Activated CD4-positive, alpha-beta memory T cell treated with anti-CD3 and anti-CD28 coated beads, Interleukin-2, amount 10 ng/mL, durations not matched to agents 7 days and 5 days (primary cell): ENCODE measurements at regions of chr3 and their contacts with region 1.

Region 1: DNA sequence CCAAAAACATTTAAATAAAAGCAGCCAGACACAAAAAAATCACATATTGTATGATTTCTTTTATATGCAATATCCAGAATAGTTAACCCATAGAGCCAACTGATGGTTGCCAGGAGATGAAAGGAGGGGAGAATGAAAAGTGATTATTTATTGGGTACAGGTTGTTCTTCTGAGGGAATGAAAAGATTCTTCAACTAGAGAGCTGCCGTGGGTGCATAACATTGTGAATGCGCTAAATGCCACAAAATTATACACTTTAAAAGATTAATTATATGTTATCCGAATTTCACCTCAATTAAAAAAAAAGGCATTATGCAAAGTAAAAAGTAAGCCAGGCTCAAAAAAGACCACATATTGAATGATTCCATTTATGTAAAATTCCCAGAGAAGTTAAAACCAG is 36.1 kb downstream of the PRKAR2A start:
- DNase-seq: no peak
- H3K4me3 Mint-ChIP-seq: no peak overlapping the region
- H3K27ac Mint-ChIP-seq: peak overlapping the region; percentile 88
- H3K4me1 Mint-ChIP-seq: peaks cover 31% of the 10 kb centered on the region
- H3K27me3 Mint-ChIP-seq: no peaks in the 10 kb centered on the region

Region 2: GRCh38 chr3:48708481-48708889 is 103.0 kb before region 1 on chr3:
- CTCF ChIA-PET with region 1: no interaction called
- POLR2A ChIA-PET with region 1: no interaction called
- DNase-seq: no peak
- H3K4me3 Mint-ChIP-seq: no peak overlapping the region
- H3K27ac Mint-ChIP-seq: no peak overlapping the region
- H3K4me1 Mint-ChIP-seq: peaks cover 24% of the 10 kb centered on the region
- H3K27me3 Mint-ChIP-seq: no peaks in the 10 kb centered on the region

Region 3: GRCh38 chr3:48776854-48777253 is 34.7 kb before region 1 on chr3:
- CTCF ChIA-PET with region 1: no interaction called
- POLR2A ChIA-PET with region 1: no interaction called
- DNase-seq: no peak
- H3K4me3 Mint-ChIP-seq: no peak overlapping the region
- H3K27ac Mint-ChIP-seq: no peak overlapping the region
- H3K4me1 Mint-ChIP-seq: no peaks in the 10 kb centered on the region
- H3K27me3 Mint-ChIP-seq: no peaks in the 10 kb centered on the region

Region 4: GRCh38 chr3:48798998-48799397 is 12.5 kb before region 1 on chr3:
- CTCF ChIA-PET with region 1: no interaction called
- POLR2A ChIA-PET with region 1: no interaction called
- DNase-seq: no peak
- H3K4me3 Mint-ChIP-seq: no peak overlapping the region
- H3K27ac Mint-ChIP-seq: no peak overlapping the region
- H3K4me1 Mint-ChIP-seq: no peaks in the 10 kb centered on the region
- H3K27me3 Mint-ChIP-seq: no peaks in the 10 kb centered on the region

Region 5: GRCh38 chr3:48847504-48848423 is 36.2 kb after region 1 on chr3 and contains the start of gene PRKAR2A:
- CTCF ChIA-PET with region 1: no interaction called
- POLR2A ChIA-PET with region 1: interaction called, 13 read pairs
- DNase-seq: peak; percentile 83
- H3K4me3 Mint-ChIP-seq: peak within 1 kb of the TSS; percentile 81
- H3K27ac Mint-ChIP-seq: peak within 1 kb of the TSS; percentile 83
- H3K4me1 Mint-ChIP-seq: peaks cover 26% of the 10 kb centered on the region
- H3K27me3 Mint-ChIP-seq: no peaks in the 10 kb centered on the region
- total RNA-seq, gene PRKAR2A: 28.3 to 29.7 TPM